Activated CD8-positive, alpha-beta T cell treated with anti-CD3 and anti-CD28 coated beads, Interleukin-2, amount 10 ng/mL, durations not matched to agents 7 days and 5 days (primary cell): ENCODE measurements at regions of chr3 and their contacts with region 1.

Region 1: GRCh38 chr3:39288300-39288808 is 8.5 kb upstream of the CX3CR1 start:
- DNase-seq: peak; percentile 91
- ATAC-seq: peak; percentile 96
- H3K4me3 Mint-ChIP-seq: no peak overlapping the region
- H3K27ac Mint-ChIP-seq: peak overlapping the region; percentile 0
- H3K4me1 Mint-ChIP-seq: peaks cover 46% of the 10 kb centered on the region
- H3K27me3 Mint-ChIP-seq: peaks cover 3% of the 10 kb centered on the region

Region 2: DNA sequence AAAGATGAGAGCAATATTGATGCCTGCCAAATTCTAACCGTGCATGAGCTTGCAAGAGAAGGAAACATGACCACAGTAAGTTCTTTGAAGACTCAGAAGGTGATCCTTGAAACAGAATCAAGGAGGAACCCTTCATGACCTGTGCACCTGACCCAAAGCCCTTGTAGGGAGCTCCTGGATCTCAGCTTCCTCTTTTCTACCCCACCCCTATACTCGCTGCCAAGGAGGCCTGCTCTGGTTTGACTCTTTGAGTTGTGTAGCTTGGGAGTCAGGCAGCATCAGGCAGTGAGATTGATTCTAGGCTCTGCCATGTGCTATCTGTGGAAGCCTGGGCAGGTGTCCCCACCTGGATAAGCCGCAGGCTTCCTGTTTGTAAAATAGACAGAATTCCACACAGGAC is 170.3 kb before region 1 on chr3:
- CTCF ChIA-PET with region 1: interaction called, 148 read pairs
- POLR2A ChIA-PET with region 1: no interaction called
- DNase-seq: no peak
- ATAC-seq: no peak
- H3K4me3 Mint-ChIP-seq: no peak overlapping the region
- H3K27ac Mint-ChIP-seq: no peak overlapping the region
- H3K4me1 Mint-ChIP-seq: no peaks in the 10 kb centered on the region
- H3K27me3 Mint-ChIP-seq: peaks cover 36% of the 10 kb centered on the region

Region 3: DNA sequence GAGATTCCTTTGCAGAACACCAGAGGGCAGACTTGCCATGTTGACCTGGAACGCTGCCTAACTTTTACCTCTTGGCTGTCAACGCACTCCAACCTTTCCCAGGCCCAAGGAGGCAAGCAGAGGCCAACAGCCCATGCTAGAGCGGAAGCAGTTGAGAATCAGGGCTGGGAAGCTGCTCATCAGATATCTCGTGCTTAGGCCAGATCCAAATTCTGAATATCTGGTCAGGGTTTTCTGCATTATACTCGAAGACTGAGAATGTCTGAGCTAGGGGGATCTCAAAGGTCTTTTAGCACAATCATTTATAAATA is 98.4 kb before region 1 on chr3:
- CTCF ChIA-PET with region 1: interaction called, 483 read pairs
- POLR2A ChIA-PET with region 1: interaction called, 14 read pairs
- DNase-seq: peak; percentile 67
- ATAC-seq: peak; percentile 54
- H3K4me3 Mint-ChIP-seq: no peak overlapping the region
- H3K27ac Mint-ChIP-seq: no peak overlapping the region
- H3K4me1 Mint-ChIP-seq: peaks cover 2% of the 10 kb centered on the region
- H3K27me3 Mint-ChIP-seq: no peaks in the 10 kb centered on the region

Region 4: GRCh38 chr3:39234705-39235104 is 53.6 kb before region 1 on chr3:
- CTCF ChIA-PET with region 1: interaction called, 27 read pairs
- POLR2A ChIA-PET with region 1: no interaction called
- DNase-seq: peak; percentile 53
- ATAC-seq: peak; percentile 93
- H3K4me3 Mint-ChIP-seq: peak overlapping the region; percentile 46
- H3K27ac Mint-ChIP-seq: peak overlapping the region; percentile 73
- H3K4me1 Mint-ChIP-seq: peaks cover 23% of the 10 kb centered on the region
- H3K27me3 Mint-ChIP-seq: peaks cover 43% of the 10 kb centered on the region

Region 5: DNA sequence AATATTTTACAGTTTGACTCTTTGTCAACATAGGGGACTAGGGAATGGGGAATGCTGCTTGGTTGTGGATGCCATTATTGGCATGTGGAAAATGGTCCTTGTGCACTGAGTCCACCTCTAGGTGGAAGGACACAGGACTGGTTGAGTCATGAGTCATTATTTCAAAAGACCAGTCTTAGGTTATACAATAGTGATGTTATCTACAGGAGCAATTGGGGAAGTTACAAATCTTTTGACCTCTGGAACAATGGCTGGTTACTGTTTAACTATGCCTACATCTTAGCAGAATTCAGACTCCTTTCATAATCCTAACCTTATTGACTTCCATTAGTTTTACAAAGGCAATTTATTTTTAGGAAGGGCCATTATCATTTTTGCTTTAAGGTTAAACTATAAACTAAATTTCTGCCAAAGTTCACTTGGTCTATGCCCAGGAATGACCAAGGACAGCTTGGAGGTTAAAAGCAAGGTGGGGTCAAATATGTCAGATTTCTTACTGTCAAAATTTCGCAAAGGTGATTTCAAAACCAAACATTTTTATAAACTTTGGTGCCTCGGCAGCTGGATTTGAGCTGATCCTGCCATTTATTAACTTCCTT is 29.3 kb after region 1 on chr3:
- CTCF ChIA-PET with region 1: interaction called, 18 read pairs
- POLR2A ChIA-PET with region 1: no interaction called
- DNase-seq: no peak
- ATAC-seq: no peak
- H3K4me3 Mint-ChIP-seq: no peak overlapping the region
- H3K27ac Mint-ChIP-seq: no peak overlapping the region
- H3K4me1 Mint-ChIP-seq: peaks cover 20% of the 10 kb centered on the region
- H3K27me3 Mint-ChIP-seq: peaks cover 8% of the 10 kb centered on the region

Region 6: GRCh38 chr3:39372833-39373232 is 84.5 kb after region 1 on chr3:
- CTCF ChIA-PET with region 1: interaction called, 238 read pairs
- POLR2A ChIA-PET with region 1: interaction called, 7 read pairs
- DNase-seq: no peak
- ATAC-seq: no peak
- H3K4me3 Mint-ChIP-seq: no peak overlapping the region
- H3K27ac Mint-ChIP-seq: no peak overlapping the region
- H3K4me1 Mint-ChIP-seq: peaks cover 2% of the 10 kb centered on the region
- H3K27me3 Mint-ChIP-seq: peaks cover 25% of the 10 kb centered on the region

Region 7: GRCh38 chr3:39515681-39516441 is 227.5 kb after region 1 on chr3:
- CTCF ChIA-PET with region 1: no interaction called
- POLR2A ChIA-PET with region 1: no interaction called
- DNase-seq: no peak
- ATAC-seq: no peak
- H3K4me3 Mint-ChIP-seq: no peak overlapping the region
- H3K27ac Mint-ChIP-seq: no peak overlapping the region
- H3K4me1 Mint-ChIP-seq: peaks cover 5% of the 10 kb centered on the region
- H3K27me3 Mint-ChIP-seq: peaks cover 47% of the 10 kb centered on the region